Activated CD8-positive, alpha-beta T cell treated with anti-CD3 and anti-CD28 coated beads, Interleukin-2, amount 10 ng/mL, durations not matched to agents 7 days and 5 days (primary cell): ENCODE measurements at regions of chr14 and their contacts with region 1.

Region 1: GRCh38 chr14:93939304-93940229 is 12.4 kb downstream of the FAM181A start:
- DNase-seq: peak; percentile 93
- ATAC-seq: peak; percentile 98
- H3K4me3 Mint-ChIP-seq: peak overlapping the region; percentile 49
- H3K27ac Mint-ChIP-seq: peak overlapping the region; percentile 68
- H3K4me1 Mint-ChIP-seq: peaks cover 21% of the 10 kb centered on the region
- H3K27me3 Mint-ChIP-seq: no peaks in the 10 kb centered on the region

Region 2: DNA sequence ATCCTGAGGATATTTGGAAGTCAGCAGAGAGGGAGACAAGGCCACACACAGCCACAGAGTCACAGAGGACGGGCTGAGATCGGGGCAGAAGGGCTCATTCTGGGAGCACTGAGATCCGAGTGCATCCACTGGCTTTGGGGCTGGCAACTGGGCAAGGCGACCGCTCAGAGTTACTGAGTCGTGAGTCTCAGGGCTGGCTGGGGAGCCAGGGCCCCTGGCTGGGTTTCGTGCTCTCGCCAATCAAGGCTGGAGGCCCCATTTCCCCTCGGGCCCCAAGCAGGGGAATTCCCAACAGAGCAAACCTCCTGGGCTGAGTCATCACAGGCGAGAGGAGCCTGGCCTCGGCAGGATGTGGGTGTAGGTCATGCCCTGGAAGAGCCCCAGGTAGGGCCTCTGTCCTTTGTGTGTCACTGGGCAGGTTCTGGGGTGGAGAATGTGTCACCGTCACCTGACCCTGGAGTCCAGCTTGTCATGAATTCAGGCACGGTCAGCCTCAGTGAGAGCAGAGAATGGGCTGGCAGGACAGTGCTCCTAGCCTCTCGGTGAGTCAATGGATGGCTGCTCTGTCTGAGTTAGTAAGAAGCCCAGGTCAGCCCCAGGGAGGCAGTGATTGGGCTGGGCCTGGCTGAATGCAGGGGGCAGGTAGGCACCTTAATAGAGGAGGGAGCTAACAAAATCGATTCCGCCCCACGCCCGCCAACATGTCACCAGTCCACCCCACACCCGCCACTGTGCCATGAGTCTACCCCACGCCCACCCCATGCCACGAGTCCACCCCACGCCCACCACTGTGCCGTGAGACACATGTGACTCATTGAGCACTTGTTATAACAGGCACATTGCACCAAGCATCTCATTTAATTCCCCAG is 19.9 kb after region 1 on chr14:
- CTCF ChIA-PET with region 1: interaction called, 376 read pairs
- POLR2A ChIA-PET with region 1: interaction called, 21 read pairs
- DNase-seq: peak; percentile 95
- ATAC-seq: peak; percentile 76
- H3K4me3 Mint-ChIP-seq: peak overlapping the region; percentile 71
- H3K27ac Mint-ChIP-seq: peak overlapping the region; percentile 98
- H3K4me1 Mint-ChIP-seq: peaks cover 97% of the 10 kb centered on the region
- H3K27me3 Mint-ChIP-seq: no peaks in the 10 kb centered on the region

Region 3: DNA sequence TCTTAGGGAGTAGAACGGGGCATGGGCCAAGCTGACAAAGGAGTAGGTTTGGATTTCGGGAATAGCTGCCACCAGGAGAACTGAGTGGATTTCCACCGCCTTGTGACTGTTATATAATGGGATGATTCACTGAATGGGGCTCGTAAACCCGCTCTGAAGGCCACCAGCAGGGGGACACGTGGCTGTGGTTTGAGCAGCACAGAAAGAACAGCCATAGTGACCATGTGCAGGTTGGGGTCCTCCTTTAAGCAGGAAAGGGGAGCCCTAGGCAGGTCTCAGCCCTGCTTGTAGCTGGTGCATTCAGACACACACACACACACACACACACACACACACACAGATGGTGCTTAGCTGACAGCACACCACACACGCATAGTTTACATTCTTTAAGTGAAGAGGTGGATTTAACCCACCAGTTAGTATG is 45.4 kb after region 1 on chr14:
- CTCF ChIA-PET with region 1: interaction called, 45 read pairs
- POLR2A ChIA-PET with region 1: interaction called, 3 read pairs
- DNase-seq: no peak
- ATAC-seq: no peak
- H3K4me3 Mint-ChIP-seq: no peak overlapping the region
- H3K27ac Mint-ChIP-seq: no peak overlapping the region
- H3K4me1 Mint-ChIP-seq: peaks cover 13% of the 10 kb centered on the region
- H3K27me3 Mint-ChIP-seq: no peaks in the 10 kb centered on the region

Region 4: GRCh38 chr14:94021001-94021400 is 81.4 kb after region 1 on chr14:
- CTCF ChIA-PET with region 1: interaction called, 44 read pairs
- POLR2A ChIA-PET with region 1: no interaction called
- DNase-seq: no peak
- ATAC-seq: no peak
- H3K4me3 Mint-ChIP-seq: no peak overlapping the region
- H3K27ac Mint-ChIP-seq: peak overlapping the region; percentile 70
- H3K4me1 Mint-ChIP-seq: peaks cover 38% of the 10 kb centered on the region
- H3K27me3 Mint-ChIP-seq: peaks cover 35% of the 10 kb centered on the region

Region 5: GRCh38 chr14:94051115-94051514 is 111.5 kb after region 1 on chr14:
- CTCF ChIA-PET with region 1: interaction called, 23 read pairs
- POLR2A ChIA-PET with region 1: no interaction called
- DNase-seq: no peak
- ATAC-seq: no peak
- H3K4me3 Mint-ChIP-seq: no peak overlapping the region
- H3K27ac Mint-ChIP-seq: peak overlapping the region; percentile 56
- H3K4me1 Mint-ChIP-seq: peaks cover 35% of the 10 kb centered on the region
- H3K27me3 Mint-ChIP-seq: no peaks in the 10 kb centered on the region

Region 6: DNA sequence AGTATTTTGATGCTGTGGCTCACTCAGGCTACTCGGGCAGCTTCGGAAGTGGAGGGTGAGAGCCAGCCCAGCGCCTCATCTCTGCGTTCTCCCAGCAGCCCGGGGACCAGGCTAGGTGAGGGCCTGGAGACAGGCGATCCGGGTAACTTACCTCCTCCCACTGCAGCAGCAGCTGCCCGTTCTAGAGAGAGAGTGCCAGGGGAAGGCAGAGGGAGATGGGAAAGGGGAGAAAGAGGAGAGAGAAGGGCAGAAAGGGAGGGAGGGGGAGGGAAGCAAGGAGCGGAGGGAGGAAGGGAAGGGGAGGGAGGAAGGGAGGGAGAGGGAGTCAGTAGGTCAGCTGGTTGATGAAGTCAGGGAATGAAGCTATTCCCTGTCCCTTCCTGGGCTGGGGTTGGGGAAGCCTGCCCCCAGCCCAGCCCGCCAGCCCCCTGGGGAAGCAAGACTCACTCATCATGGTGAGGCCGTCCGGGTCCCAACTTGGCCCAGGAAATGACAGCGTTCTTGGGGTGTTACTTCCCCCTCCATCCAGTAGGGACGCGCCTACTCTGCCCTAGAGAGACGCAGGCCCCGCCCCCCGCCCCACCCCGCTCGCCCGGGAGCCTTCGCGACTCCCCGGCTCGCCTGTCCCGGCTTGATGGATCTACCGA is 189.7 kb after region 1 on chr14 and contains the start of gene IFI27L2:
- CTCF ChIA-PET with region 1: interaction called, 32 read pairs
- POLR2A ChIA-PET with region 1: no interaction called
- DNase-seq: peak; percentile 84
- ATAC-seq: peak; percentile 98
- H3K4me3 Mint-ChIP-seq: peak within 1 kb of the TSS; percentile 78
- H3K27ac Mint-ChIP-seq: peak within 1 kb of the TSS; percentile 88
- H3K4me1 Mint-ChIP-seq: peaks cover 17% of the 10 kb centered on the region
- H3K27me3 Mint-ChIP-seq: peaks cover 11% of the 10 kb centered on the region
- total RNA-seq, gene IFI27L2: 65.2 to 74.6 TPM

Region 7: DNA sequence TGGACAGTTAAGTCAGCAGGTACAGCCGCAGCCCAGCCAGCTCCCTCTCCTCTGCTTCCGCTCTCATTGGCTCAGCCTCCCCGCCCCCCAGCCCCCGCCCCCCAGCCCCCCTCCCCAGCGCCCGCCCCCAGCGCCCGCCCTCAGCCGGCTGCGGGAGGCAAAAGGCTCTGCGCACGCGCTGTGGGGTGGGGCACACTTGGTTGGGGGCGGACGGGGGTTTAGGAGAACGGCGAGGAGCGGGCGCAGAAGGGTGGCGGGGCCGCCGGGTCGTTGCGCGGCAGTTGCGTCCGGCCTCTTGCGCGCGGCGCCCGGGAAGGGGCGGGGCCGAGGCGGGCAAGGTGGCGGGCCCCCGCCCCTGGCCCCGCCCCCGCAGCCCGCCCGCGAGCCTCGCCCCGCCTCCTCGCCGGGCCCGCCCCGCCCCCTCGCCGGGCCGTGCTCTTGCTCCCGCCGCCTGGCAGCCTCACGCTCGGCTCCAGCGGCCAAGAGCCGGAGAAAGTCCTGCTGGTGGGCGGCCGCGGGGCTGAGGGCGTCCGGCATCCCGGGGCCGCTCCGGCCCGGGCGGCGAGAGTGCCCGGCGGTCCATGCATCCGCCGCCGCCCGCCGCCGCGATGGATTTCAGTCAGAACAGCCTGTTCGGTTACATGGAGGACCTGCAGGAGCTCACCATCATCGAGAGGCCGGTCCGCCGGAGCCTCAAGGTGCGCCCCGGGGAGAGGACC is 234.5 kb after region 1 on chr14 and contains the start of gene PPP4R4:
- CTCF ChIA-PET with region 1: interaction called, 21 read pairs
- POLR2A ChIA-PET with region 1: no interaction called
- DNase-seq: peak; percentile 89
- ATAC-seq: peak; percentile 92
- H3K4me3 Mint-ChIP-seq: peak within 1 kb of the TSS; percentile 70
- H3K27ac Mint-ChIP-seq: peak within 1 kb of the TSS; percentile 59
- H3K4me1 Mint-ChIP-seq: peaks cover 18% of the 10 kb centered on the region
- H3K27me3 Mint-ChIP-seq: peaks cover 66% of the 10 kb centered on the region
- total RNA-seq, gene PPP4R4: 0.16 to 0.26 TPM

Region 8: DNA sequence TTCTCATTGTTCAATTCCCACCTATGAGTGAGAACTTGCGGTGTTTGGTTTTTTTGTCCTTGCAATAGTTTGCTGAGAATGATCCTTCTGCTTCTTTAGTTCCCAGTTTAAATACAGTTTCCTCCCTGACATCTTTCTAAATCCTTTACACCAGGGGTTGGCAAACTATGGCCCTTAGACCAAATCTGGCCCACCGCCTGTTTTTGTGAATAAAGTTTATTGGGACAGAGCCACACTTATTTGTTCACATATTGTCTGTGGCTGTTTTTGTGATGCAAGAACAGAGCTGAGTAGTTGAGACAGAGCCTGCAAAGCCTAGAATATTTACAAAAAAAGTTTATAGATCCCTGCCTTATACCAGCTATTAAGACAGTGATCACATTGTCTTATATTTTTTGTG is 299.8 kb after region 1 on chr14:
- CTCF ChIA-PET with region 1: no interaction called
- POLR2A ChIA-PET with region 1: no interaction called
- DNase-seq: no peak
- ATAC-seq: no peak
- H3K4me3 Mint-ChIP-seq: no peak overlapping the region
- H3K27ac Mint-ChIP-seq: no peak overlapping the region
- H3K4me1 Mint-ChIP-seq: no peaks in the 10 kb centered on the region
- H3K27me3 Mint-ChIP-seq: peaks cover 2% of the 10 kb centered on the region